Ascending aorta (tissue), 2 donors: ENCODE measurements at regions of chr1 and their contacts with region 1.

Region 1: DNA sequence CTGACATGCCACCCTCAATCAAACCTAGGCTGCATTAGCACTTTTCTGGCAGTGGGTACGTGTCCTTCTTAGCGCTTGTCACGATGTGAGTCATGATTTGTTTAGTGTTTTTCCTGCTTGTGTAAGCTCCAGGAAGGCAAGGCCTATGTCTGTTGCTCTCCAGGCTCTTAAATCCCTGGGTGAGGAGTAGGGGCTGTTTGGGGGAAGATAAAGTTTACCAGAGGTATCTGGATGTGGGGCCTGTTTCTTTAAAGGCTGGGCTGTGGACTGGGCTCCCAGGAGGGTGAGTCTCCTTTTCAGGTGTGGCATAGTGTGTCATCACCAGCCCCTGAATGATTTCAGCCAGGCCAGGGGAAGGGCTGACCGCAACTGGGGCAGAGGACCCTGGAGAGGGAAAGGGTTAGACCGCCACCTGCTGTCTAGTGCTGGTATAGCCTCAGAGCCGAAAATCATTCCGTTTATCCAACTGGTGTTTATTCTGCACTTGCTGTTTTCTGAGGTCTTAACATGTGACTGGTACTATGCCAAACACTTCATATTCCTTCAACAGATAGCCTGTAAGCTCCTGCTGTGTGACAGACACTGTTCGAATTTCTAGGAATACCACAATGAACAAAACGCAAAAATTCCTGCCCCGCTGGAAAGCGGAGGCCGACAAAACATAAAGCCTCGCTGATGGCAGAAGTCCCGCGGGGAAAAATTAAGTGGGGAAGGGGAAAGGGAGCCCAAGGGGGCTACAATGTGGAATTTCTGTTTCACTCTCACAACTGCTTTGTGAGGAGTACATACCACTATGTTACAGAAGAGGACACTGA is 9.7 kb downstream of the SERINC2 start:
- DNase-seq: peak; percentile 16 to 78
- H3K4me3 ChIP-seq: no peak overlapping the region
- H3K27ac ChIP-seq: no peak overlapping the region
- H3K4me1 ChIP-seq: no peaks in the 10 kb centered on the region
- H3K27me3 ChIP-seq: no peaks in the 10 kb centered on the region
- CTCF ChIP-seq: peak; percentile 82 to 94 (median 86)

Region 2: DNA sequence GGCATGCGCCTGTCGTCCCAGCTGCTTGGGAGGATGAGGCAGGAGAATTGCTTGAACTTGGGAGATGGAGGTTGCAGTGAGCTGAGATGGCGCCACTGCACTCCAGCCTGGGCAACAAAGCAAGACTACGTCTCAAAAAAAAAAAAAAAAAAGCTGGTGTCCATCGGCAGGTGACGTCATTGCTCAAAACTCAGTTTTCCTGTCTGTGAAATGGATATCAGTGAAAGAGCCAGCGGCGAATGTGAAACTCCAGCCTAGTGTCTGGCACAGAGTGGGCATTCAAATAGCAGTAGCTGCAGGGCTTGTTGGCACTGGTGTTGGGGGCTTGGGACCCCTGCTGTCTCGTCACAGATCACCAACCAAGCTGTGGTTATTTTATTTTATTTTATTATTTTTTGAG is 258.8 kb before region 1 on chr1:
- intact Hi-C with region 1: loop called (anchors 2 kb)
- DNase-seq: no peak
- H3K4me3 ChIP-seq: no peak overlapping the region
- H3K27ac ChIP-seq: no peak overlapping the region
- H3K4me1 ChIP-seq: peaks cover 0 to 5% of the 10 kb centered on the region in 2 donors
- H3K27me3 ChIP-seq: no peaks in the 10 kb centered on the region
- CTCF ChIP-seq: no peak

Region 3: DNA sequence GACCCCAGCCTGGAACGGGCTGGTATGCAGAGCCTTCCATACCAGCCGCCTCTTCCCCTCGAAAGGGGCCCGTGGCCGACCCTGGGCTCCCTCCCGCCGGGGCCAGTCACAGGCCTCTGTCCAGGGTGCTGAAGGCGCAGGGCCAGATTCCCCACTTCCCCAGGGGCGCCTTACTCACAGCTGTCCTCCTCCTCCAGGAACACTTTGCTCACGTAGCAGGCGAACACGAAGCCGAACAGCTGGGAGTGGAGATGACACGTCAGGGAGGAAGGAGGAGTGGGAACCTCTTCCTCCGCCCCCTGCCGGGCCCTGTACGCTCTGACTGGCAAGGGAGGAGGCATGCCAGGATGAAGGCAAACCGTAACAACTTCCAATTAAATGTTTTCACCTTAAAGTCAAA is 240.4 kb before region 1 on chr1:
- intact Hi-C with region 1: loop called (anchors 5 kb)
- DNase-seq: peak; percentile 35 to 87
- H3K4me3 ChIP-seq: peak overlapping the region in 1 of 2 donors; percentile 16
- H3K27ac ChIP-seq: no peak overlapping the region
- H3K4me1 ChIP-seq: peaks cover 4% of the 10 kb centered on the region in 2 donors
- H3K27me3 ChIP-seq: no peaks in the 10 kb centered on the region
- CTCF ChIP-seq: peak; percentile 10 to 34 (median 10)

Region 4: DNA sequence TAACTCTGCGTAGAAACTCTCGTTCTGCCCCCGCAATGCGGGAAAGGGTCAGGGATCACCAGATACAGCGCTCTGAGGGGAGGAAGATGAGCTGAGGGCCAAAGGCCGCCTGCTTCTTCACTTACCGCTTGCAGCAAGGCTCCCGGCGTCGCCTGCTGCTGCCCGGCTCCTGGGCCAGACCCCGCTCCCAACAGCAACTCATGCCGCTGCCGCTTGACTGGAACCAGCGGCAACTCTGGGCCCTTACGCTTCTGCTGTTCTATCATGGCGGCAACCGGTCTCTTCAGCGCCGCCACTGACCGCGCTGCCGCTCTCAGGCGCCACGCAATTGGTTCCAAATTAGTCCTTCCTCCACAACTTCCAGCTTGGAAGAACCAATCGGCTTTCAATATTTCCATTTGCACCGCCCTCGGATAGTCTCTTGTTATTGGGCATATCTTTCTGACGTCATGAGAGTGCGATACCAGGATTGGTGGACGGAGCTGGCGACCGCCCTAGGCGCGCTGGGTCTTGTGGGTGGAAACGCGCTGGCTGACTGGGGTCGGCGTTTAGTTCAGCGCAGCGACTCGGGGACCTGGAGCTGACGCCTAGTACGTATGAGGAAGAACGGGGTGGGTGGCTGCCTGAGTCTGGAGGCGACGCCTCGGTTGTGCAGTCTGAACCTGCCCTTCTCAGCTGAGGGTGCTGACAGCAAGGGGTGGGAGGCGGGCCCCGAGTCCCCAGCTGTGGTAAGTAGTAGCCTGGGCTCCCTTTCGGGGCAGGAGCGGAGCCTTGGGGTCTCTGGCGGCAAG is 126.0 kb before region 1 on chr1 and contains the starts of genes SNRNP40 and ZCCHC17:
- intact Hi-C with region 1: loop called (anchors 1 kb)
- DNase-seq: peak; percentile 97 to 98
- H3K4me3 ChIP-seq: peak within 1 kb of the TSS; percentile 84 to 93
- H3K27ac ChIP-seq: peak within 1 kb of the TSS; percentile 89 to 90
- H3K4me1 ChIP-seq: peaks cover 4 to 29% of the 10 kb centered on the region in 2 donors
- H3K27me3 ChIP-seq: no peaks in the 10 kb centered on the region
- CTCF ChIP-seq: peak in 1 of 3 experiments; percentile 23
- total RNA-seq, gene SNRNP40: 11.8 TPM
- total RNA-seq, gene ZCCHC17: 9.7 TPM

Region 5: GRCh38 chr1:31394628-31395193 is 28.0 kb before region 1 on chr1:
- intact Hi-C with region 1: loop called (anchors 1 kb)
- DNase-seq: peak; percentile 61 to 88
- H3K4me3 ChIP-seq: peak overlapping the region; percentile 40 to 62
- H3K27ac ChIP-seq: no peak overlapping the region
- H3K4me1 ChIP-seq: peaks cover 0 to 3% of the 10 kb centered on the region in 2 donors
- H3K27me3 ChIP-seq: no peaks in the 10 kb centered on the region
- CTCF ChIP-seq: peak; percentile 88 to 91 (median 90)

Region 6: DNA sequence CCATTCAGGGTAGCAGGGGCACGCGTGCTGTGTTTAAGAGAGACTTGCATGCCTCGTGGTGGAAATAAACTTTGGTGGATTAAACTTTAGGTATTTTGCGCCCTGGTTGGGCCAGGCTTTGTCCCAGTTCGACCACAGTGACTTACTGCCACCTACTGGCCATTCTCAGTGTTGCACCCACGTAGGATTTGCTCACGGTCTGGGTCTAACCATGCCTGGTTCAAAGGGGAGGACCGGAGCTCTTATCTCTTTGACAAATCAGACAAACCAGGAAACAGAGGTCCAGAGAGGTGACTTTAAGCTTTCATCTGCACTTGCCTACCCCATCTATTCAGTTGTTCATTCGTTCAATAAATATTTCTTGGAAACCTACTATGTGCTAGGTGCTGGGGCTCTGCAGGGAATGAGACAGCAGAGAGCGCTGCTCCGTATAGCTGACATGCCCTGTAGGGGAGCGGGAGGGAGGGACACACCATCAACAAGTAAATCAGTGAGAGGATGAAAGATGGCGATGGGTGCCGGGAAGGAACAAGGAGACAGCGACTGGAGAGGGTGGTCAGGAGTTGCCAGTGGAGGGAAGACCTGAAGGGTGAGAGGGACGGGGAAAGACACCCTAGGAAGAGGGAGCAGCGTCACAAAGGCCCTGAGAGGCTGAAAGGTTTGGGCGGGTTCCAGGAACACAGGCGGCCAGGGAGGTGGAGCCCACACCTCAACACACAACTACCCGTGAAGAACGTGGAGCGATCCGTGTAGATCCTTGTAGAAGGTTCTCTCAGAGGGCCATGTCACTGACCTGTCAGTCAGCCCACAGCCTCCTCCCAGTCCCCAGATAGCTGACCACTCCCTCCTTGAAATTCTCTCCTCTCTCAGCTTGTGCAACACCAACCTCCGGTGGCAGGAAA is 126.4 kb after region 1 on chr1:
- intact Hi-C with region 1: loop called (anchors 5 kb)
- DNase-seq: peak in 1 of 2 donors; percentile 94
- H3K4me3 ChIP-seq: peak overlapping the region; percentile 29 to 36
- H3K27ac ChIP-seq: no peak overlapping the region
- H3K4me1 ChIP-seq: peaks cover 2 to 11% of the 10 kb centered on the region in 2 donors
- H3K27me3 ChIP-seq: no peaks in the 10 kb centered on the region
- CTCF ChIP-seq: peak; percentile 90 to 91 (median 91)